Activated CD4-positive, alpha-beta T cell treated with anti-CD3 and anti-CD28 coated beads for 36 hours (primary cell): ENCODE measurements at regions of chr12 and their contacts with region 1.

Region 1: GRCh38 chr12:9634177-9634803 is 26.6 kb upstream of the KLRB1 start:
- DNase-seq: peak; percentile 88
- ATAC-seq: peak; percentile 85
- H3K4me3 Mint-ChIP-seq: no peak overlapping the region
- H3K27ac Mint-ChIP-seq: peak overlapping the region; percentile 82
- H3K4me1 Mint-ChIP-seq: peaks cover 43% of the 10 kb centered on the region
- H3K27me3 Mint-ChIP-seq: no peaks in the 10 kb centered on the region

Region 2: GRCh38 chr12:9667403-9668160 is 33.3 kb after region 1 on chr12:
- CTCF ChIA-PET with region 1: interaction called, 12 read pairs
- POLR2A ChIA-PET with region 1: interaction called, 6 read pairs
- intact Hi-C with region 1: no loop called
- DNase-seq: peak; percentile 45
- ATAC-seq: peak; percentile 54
- H3K4me3 Mint-ChIP-seq: peak overlapping the region; percentile 93
- H3K27ac Mint-ChIP-seq: peak overlapping the region; percentile 99
- H3K4me1 Mint-ChIP-seq: peaks cover 61% of the 10 kb centered on the region
- H3K27me3 Mint-ChIP-seq: no peaks in the 10 kb centered on the region

Region 3: GRCh38 chr12:9687228-9687627 is 52.9 kb after region 1 on chr12:
- CTCF ChIA-PET with region 1: interaction called, 13 read pairs
- POLR2A ChIA-PET with region 1: no interaction called
- intact Hi-C with region 1: no loop called
- DNase-seq: no peak
- ATAC-seq: peak; percentile 68
- H3K4me3 Mint-ChIP-seq: no peak overlapping the region
- H3K27ac Mint-ChIP-seq: no peak overlapping the region
- H3K4me1 Mint-ChIP-seq: peaks cover 68% of the 10 kb centered on the region
- H3K27me3 Mint-ChIP-seq: no peaks in the 10 kb centered on the region

Region 4: GRCh38 chr12:9732921-9733461 is 98.7 kb after region 1 on chr12 and contains the start of gene CLECL1:
- CTCF ChIA-PET with region 1: interaction called, 5 read pairs
- POLR2A ChIA-PET with region 1: no interaction called
- intact Hi-C with region 1: loop called in 1 of 2 experiments (anchors 2 kb)
- DNase-seq: no peak
- ATAC-seq: peak; percentile 79
- H3K4me3 Mint-ChIP-seq: peak within 1 kb of the TSS; percentile 69
- H3K27ac Mint-ChIP-seq: peak within 1 kb of the TSS; percentile 84
- H3K4me1 Mint-ChIP-seq: peaks cover 53% of the 10 kb centered on the region
- H3K27me3 Mint-ChIP-seq: no peaks in the 10 kb centered on the region
- total RNA-seq, gene CLECL1: 3.1 to 3.8 TPM